ENCODE measurements at regions of chr17 and their contacts with region 1.

Region 1: GRCh38 chr17:1490643-1491442 is 1.6 kb downstream of the MYO1C start:
- DNase-seq: peak; percentile 94

Region 2: DNA sequence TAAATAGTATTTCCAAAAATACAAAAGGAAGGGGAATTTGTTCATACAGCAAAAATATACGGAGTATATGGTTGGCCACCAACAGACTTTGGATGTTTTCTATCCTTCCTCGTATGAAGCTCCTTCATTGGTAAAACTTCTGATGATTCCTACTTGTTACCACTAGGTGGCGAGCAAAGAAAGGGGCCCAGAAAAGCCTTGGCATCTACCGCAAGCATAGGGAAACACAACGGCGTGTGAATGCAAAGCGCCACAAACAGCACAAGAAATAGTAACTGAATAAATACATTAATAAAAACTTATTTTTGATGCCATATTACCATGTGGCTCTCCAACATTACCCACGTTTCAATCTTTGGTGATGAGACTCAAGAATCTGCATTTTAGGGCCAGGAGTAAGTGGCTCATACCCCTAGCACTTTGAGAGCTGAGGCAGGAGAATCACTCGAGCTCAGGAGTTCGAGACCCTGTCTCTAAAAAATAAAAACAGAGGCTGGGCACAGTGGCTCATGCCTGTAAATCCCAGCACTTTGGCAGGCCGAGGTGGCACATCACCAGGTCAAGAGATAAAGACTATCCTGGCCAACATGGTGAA is 125.3 kb before region 1 on chr17:
- intact Hi-C with region 1: loop called (anchors 10 kb)
- DNase-seq: no peak

Region 3: GRCh38 chr17:1516388-1517161 is 25.7 kb after region 1 on chr17 and contains the start of gene INPP5K:
- intact Hi-C with region 1: no loop called
- DNase-seq: peak; percentile 100
- total RNA-seq, gene INPP5K: 23.5 to 25.2 TPM

Measured in posterior vena cava (tissue), 2 donors.